HEK293T (cell line): ENCODE measurements at regions of chr21 and their contacts with region 1.

Region 1: DNA sequence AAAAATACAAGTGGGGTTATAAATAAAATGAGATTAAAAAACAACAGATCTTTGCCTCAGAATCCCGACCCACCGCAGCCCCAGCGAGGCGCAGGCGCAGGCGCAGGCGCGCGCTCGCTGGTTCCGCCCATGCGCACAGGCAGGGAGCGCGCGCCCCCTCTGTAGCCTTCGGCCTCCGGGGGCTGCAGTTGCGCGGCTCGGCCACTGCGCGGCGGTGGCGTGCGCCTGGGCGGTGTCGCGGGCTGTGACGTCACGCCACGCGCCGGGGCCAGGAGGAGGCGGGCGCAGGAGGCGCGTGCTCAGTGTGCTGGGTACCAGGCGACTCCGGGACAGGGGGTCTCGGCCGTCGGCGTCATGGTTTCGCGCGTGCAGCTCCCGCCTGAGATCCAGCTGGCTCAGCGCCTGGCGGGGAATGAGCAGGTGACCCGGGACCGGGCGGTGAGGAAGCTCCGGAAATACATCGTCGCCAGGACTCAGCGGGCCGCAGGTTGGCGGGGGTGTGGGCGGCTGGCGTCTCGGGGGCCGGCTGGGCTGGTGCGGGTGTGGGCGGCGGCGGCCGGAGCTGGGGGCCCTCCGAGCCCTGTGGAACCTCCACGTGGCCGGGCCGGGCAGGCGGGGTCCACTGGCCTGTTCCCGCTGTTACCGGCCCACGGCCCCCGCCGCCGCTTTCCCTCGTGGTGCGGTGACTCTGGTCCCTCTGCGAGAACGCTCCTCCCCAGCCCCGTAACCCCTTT is at the start of gene RRP1:
- DNase-seq: peak; percentile 100

Region 2: GRCh38 chr21:43585924-43586424 is 203.5 kb before region 1 on chr21:
- CTCF ChIA-PET with region 1: no interaction called
- POLR2A ChIA-PET with region 1: no interaction called
- DNase-seq: no peak

Region 3: GRCh38 chr21:43728467-43729390 is 60.7 kb before region 1 on chr21:
- CTCF ChIA-PET with region 1: interaction called, 3 read pairs
- POLR2A ChIA-PET with region 1: interaction called, 14 read pairs
- DNase-seq: peak; percentile 95

Region 4: DNA sequence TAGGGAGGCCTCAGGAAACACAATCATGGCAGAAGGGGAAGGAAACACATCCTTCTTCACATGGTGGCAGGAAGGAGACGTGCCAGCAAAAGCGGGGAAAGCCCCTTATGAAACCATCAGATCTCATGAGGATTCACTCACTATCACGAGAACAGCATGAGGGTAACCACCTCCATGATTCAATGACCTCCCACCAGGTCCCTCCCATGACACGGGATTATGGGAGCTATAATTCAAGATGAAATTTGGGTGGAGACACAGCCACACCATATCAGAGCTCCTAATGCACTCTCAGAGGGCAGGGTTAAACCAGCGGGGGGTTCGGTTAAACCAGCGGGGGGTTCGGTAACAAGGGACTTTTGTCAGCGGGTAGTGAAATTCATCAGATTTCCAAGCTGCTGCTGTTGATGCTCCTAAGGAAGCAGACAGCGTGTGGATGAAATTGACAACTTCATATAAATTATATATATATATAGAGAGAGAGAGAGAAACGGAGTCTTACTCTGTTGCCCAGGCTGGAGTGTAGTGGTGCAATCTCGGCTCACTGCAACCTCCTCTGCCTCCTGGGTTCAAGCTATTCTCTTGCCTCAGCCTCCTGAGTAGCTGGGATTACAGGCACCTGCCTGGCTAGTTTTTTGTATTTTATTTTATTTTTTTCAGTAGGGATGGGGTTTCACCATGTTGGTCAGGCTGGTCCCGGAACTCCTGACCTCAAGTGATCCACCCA is 17.6 kb before region 1 on chr21:
- CTCF ChIA-PET with region 1: interaction called, 12 read pairs
- POLR2A ChIA-PET with region 1: interaction called, 4 read pairs
- DNase-seq: peak; percentile 54

Region 5: DNA sequence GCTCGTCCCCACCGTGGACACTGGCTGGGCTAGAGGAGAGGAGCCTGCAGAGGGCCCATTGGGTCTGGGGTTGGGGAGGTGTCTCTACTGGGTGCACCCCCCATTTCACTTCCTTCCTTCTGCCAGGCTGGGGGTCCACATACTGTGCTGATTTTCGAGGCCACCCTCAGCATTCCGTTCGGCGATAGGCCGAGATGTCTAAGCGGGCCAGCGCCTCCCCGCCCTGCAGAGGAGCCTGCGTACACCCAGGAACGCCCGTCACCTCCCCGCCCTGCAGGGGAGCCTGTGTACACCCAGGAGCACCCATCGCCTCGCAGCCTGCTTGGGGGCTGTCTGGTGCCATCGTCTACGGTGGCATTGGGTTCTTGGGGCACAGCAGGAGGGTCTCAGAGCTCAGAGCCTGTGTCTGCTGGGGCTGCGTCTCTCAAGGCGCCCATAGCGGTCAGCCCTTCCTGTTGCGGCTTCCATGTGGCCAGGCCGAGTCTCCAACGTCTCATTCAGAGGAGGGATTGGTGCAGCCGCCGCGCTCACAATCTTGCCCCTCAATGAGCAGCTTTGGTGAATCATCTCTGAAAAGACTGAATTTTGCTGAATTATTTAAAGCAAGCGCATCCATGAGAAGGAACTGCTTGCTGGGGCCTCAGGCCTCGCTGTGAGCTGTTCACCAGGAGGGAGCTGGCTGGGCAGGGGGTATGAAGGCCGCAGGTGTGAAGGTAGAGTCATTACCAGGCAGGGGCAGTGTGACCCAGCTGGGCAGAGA is 44.9 kb after region 1 on chr21:
- CTCF ChIA-PET with region 1: no interaction called
- POLR2A ChIA-PET with region 1: no interaction called
- DNase-seq: no peak